ENCODE measurements at regions of chrX and their contacts with region 1.

Region 1: DNA sequence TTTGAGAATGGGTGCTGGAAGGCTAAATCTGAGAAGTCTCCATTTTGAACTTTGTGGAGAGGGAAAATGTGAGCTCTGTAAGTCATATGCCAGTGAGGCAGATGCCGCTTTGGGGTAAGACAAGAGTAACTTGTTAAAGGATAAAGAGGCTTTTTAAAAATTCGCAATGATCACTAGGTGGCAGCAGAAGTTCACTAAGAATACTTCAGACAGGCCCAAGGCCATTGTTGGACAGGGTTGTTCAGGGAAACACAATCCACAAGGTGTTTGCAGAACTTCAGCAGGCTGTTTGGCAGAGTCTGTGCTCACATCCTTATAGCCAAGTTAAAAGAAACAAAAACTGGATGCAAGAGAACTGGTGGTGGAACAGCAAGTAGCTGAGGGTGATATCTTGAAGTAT is 13.7 kb upstream of the PIGA start:
- DNase-seq: peak; percentile 62
- H3K4me3 ChIP-seq: no peak overlapping the region
- H3K27ac ChIP-seq: peak overlapping the region in 1 of 2 experiments; percentile 93; a peak in 2 of 4 replicates
- H3K4me1 ChIP-seq: peaks cover 0 to 7% of the 10 kb centered on the region in 2 experiments; a peak in 2 of 4 replicates
- H3K27me3 ChIP-seq: peaks cover 4% of the 10 kb centered on the region; the same call in 1 of the 2 replicates
- CTCF ChIP-seq: peak; percentile 75
- EP300 ChIP-seq: no peak
- RAD21 ChIP-seq: peak; percentile 91

Region 2: DNA sequence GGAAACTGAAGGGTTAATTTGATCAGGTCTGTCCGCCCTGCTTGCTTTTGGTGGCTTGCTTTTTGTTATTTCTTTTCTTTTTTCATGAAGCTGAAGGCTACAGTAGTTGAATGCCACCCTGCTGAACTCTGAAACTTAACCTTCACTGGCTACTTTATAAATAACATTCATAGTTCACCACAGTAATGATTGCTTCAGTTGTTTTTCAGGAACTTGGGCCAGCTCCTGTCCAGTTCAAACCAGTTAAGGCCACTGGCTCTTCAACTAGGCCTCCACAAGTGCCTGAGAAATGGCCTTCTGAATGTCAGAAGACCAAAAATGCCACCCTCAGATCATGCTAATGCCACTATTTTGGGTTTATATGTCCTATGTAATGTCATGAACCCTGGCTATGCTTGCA is 71.4 kb before region 1 on chrX:
- CTCF ChIA-PET with region 1: no interaction called
- POLR2A ChIA-PET with region 1: no interaction called
- DNase-seq: no peak
- H3K4me3 ChIP-seq: no peak overlapping the region
- H3K27ac ChIP-seq: no peak overlapping the region
- H3K4me1 ChIP-seq: no peaks in the 10 kb centered on the region
- H3K27me3 ChIP-seq: no peaks in the 10 kb centered on the region
- CTCF ChIP-seq: no peak
- EP300 ChIP-seq: no peak
- RAD21 ChIP-seq: no peak

Region 3: DNA sequence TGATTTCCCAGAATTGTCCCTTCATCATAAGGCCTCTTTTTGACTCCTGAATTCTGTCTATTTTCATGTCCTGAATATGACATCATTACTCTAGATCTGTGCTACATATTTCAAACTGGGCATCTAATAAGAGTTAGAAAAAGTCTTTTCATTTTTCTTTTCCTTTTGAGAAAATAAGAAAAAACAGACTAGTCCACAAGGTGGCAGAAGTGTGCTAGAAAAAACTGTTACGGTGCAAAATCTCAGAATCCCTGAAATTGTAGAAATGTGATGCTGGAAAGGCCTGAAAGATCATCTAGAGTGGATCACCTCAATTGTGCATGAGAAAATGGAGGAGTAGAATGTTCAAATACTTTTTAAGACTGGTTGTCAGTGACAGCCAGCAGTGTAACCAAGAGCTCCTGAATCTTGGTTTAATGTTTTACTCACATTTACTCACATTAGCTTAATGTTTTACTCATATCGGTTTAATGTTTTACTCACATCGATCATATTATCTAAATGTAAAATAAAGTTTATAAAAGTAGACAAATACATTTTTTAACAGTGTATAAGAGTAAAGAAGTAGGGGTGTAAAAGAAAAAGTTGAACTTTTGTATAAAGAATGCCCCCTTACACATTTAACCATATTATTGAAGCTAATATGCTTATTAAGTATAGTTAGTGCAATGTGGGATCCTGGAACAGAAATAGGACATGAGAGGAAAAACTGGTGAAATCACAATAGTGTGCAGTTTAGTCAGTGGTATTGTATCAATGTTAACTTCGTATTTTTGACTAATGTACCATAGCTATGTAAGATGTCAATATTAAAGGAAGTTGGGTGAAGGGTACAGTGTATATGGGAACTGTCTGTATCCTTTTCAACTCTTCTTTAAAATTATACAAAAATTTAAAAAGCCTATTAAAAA is 48.9 kb before region 1 on chrX:
- CTCF ChIA-PET with region 1: interaction called, 17 read pairs
- POLR2A ChIA-PET with region 1: no interaction called
- DNase-seq: peak; percentile 49
- H3K4me3 ChIP-seq: no peak overlapping the region; a peak in 1 of 4 replicates
- H3K27ac ChIP-seq: no peak overlapping the region; a peak in 1 of 4 replicates
- H3K4me1 ChIP-seq: no peaks in the 10 kb centered on the region; a peak in 1 of 4 replicates
- H3K27me3 ChIP-seq: no peaks in the 10 kb centered on the region
- CTCF ChIP-seq: peak; percentile 70
- EP300 ChIP-seq: no peak
- RAD21 ChIP-seq: peak; percentile 73

Region 4: DNA sequence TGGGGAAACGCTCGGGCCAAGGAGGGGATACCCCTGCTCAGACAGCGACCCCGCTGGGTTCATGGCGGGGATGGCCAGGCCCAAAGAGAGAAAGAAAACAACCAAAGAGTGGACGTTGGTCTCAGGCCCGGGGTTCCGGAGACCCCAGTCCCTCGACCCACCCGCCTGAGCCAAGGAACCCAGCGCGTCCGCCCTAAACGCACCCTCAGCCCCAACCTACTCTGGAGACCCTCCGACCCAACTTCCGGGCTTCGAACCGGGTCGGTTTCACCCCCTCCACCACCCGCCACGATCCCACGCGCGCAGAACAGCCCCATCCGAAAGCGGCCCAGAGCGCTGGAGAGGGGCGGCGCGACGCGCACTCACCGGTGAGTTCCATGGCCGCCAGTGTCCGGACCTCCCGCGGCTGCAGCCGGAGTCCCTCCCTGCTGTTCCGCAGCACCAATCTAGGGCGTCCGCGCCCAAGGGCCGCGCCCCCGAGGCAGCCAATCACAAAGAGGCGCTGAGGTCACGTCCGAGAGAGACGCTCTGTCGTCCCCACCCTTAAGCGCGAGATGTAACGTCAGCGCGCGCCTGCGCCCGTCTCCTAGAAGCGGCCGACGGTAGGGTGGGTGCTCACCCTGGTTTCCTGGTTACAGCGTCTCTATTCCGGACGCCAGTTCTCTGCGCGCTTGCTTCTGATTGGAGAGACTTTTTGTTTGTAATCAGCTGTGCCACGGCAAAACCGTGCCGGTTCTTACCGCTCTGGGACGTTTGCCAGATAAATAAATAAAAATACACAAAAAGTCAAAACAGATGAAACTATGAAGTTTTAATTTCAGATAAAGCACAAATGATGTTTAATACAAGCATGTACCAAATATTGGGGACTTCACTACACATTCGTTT is 13.7 kb before region 1 on chrX and contains the start of gene PIGA:
- CTCF ChIA-PET with region 1: interaction called, 30 read pairs
- POLR2A ChIA-PET with region 1: no interaction called
- DNase-seq: peak; percentile 89
- H3K4me3 ChIP-seq: peak within 1 kb of the TSS; percentile 61 to 70
- H3K27ac ChIP-seq: peak within 1 kb of the TSS; percentile 65
- H3K4me1 ChIP-seq: no peaks in the 10 kb centered on the region
- H3K27me3 ChIP-seq: 0 out of 2 replicates have a peak, but pooled peaks cover 3% of the 10 kb centered on the region
- CTCF ChIP-seq: no peak
- EP300 ChIP-seq: no peak
- RAD21 ChIP-seq: no peak
- polyA plus RNA-seq, gene PIGA: 2.8 and 2.9 TPM in 2 replicates

Region 5: DNA sequence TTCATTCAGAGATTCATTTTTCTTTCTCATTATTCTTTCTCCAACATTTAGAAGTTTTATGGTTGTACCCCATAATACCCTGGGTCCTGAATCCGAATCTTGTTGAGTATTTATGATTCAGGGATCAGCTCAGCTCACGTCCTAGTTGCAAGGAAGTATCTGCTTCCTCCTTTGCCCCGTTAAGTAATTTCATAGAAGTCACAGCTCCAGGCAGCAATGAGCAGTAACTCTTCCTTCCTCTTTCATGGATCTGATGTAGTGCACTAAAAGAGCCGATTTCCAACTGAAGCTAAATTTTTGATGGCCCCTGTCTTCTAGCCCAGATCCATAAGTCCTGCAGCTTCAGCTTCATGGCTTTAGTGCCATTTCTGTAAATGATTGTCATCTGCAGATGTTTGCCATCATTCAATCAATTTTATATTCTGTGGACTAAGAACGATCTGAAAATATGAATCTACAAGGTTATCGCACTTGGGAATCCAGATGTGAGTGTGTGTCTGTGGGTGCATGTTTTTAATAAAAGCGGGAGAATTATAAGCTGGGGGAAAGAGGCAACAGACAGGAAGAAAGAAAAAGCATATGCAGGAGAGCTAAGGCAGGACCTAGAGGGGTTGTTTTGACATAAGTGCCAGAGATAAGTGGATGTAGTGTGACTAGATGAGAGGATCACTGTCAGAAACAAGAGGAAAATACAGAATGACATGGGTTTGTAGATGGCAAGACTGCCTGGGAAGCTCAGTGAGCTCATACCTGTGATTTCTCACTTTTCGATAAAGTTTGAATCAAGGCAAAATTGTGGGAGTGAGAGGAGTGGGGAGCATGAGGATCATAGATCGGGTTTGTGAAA is 17.7 kb after region 1 on chrX:
- CTCF ChIA-PET with region 1: interaction called, 17 read pairs
- POLR2A ChIA-PET with region 1: interaction called, 7 read pairs
- DNase-seq: peak; percentile 45
- H3K4me3 ChIP-seq: no peak overlapping the region
- H3K27ac ChIP-seq: peak overlapping the region in 1 of 2 experiments; percentile 77; a peak in 2 of 4 replicates
- H3K4me1 ChIP-seq: no peaks in the 10 kb centered on the region; a peak in 1 of 4 replicates
- H3K27me3 ChIP-seq: no peaks in the 10 kb centered on the region
- CTCF ChIP-seq: no peak
- EP300 ChIP-seq: peak in 1 of 2 experiments; percentile 86; a peak in 2 of 4 replicates
- RAD21 ChIP-seq: no peak

Region 6: DNA sequence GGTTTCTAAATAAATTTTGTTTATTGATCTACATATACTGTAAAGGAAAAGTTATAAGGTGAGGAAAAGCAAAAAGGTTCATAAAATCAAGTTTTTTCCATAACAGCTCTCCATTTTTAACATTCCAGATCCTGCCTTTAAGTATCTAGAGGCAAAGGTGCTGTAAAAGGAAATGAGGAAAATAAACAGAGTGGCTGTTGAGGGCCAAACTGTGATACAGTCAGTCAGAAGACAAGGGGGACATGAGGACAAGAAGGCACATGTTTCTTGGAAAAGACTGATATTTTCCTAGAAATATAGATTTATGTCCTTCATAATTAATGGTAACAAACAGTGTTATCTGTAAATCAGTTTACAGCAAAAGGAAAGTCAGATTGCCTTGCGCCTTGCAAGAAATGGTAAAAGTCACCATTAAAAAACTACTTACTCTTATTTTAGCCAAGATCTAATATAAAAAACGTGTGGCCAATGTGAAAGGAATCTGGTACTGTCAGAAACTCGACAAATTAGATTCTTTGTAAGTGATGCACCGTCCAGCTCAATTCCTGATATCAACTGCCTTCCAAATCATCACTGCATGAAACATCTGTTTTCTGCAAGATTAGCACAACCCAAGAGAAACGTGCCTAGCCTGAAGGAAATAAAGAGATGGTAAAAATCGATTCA is 69.1 kb after region 1 on chrX:
- CTCF ChIA-PET with region 1: interaction called, 18 read pairs
- POLR2A ChIA-PET with region 1: no interaction called
- DNase-seq: no peak
- H3K4me3 ChIP-seq: no peak overlapping the region
- H3K27ac ChIP-seq: peak overlapping the region; percentile 59 to 99
- H3K4me1 ChIP-seq: peaks cover 0 to 5% of the 10 kb centered on the region in 2 experiments; a peak in 2 of 4 replicates
- H3K27me3 ChIP-seq: no peaks in the 10 kb centered on the region
- CTCF ChIP-seq: no peak
- EP300 ChIP-seq: peak in 1 of 2 experiments; percentile 92; a peak in 3 of 4 replicates
- RAD21 ChIP-seq: no peak; the same call in 1 of the 2 replicates

Region 7: DNA sequence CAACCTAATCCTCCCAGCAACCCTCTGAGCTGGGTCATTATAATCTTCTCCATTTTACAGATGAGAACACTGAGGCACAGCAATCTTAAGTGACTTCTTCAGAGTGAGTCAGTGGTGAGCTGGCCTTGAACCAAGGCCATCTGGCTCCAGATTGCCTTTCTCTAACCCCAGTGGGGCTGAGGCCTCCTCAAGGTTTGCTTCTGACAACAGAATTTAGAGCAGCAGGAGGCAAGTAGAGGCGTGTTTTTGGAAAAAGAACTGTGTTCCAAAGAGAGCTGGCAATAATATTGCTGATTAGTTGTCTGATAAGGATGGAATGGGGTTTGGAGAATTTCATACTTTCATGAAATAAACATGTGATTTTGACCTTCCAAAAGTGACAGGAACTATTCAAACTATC is 102.9 kb after region 1 on chrX:
- CTCF ChIA-PET with region 1: interaction called, 17 read pairs
- POLR2A ChIA-PET with region 1: no interaction called
- DNase-seq: no peak
- H3K4me3 ChIP-seq: no peak overlapping the region
- H3K27ac ChIP-seq: peak overlapping the region in 1 of 2 experiments; percentile 79; a peak in 2 of 4 replicates
- H3K4me1 ChIP-seq: peaks cover 0 to 10% of the 10 kb centered on the region in 2 experiments; a peak in 2 of 4 replicates
- H3K27me3 ChIP-seq: no peaks in the 10 kb centered on the region
- CTCF ChIP-seq: no peak
- EP300 ChIP-seq: peak in 1 of 2 experiments; percentile 39; a peak in 1 of 4 replicates
- RAD21 ChIP-seq: no peak

Region 8: DNA sequence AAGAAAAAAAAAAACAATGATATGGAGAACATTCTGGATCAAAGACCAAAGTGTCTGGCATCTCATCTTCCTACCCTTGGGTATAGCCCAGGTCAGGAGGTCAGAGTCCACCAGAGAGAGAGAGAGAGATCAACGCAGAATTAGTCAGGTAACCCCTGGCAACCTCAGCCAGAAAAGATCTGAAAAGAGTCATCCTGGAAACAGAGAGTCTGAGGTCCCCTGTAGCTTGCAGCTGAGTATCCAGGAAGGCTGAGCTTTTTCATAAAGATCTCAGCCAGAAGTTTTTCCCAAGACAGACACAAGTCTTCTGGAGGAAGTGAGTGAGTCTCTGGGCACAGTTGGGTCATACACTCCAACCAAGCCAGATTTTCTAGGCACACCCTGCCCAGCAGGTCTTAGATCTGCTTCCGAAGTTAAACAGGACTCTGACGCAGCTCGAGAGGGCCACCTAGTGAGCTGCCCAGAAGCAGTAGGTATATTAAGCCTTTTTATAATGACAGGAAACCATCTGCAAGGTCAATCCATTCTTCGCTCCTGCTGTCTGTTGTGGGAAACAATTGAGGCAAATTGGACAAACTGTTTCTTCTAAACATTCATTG is 216.0 kb after region 1 on chrX:
- CTCF ChIA-PET with region 1: interaction called, 12 read pairs
- POLR2A ChIA-PET with region 1: no interaction called
- DNase-seq: peak; percentile 27
- H3K4me3 ChIP-seq: no peak overlapping the region
- H3K27ac ChIP-seq: no peak overlapping the region; a peak in 1 of 4 replicates
- H3K4me1 ChIP-seq: peaks cover 0 to 5% of the 10 kb centered on the region in 2 experiments; a peak in 2 of 4 replicates
- H3K27me3 ChIP-seq: peaks cover 7% of the 10 kb centered on the region; the same call in 1 of the 2 replicates
- CTCF ChIP-seq: peak; percentile 69
- EP300 ChIP-seq: no peak
- RAD21 ChIP-seq: peak; percentile 83